Activated naive CD4-positive, alpha-beta T cell treated with anti-CD3 and anti-CD28 coated beads, Interleukin-2, amount 10 ng/mL, durations not matched to agents 7 days and 5 days (primary cell): ENCODE measurements at regions of chr1 and their contacts with region 1.

Region 1: DNA sequence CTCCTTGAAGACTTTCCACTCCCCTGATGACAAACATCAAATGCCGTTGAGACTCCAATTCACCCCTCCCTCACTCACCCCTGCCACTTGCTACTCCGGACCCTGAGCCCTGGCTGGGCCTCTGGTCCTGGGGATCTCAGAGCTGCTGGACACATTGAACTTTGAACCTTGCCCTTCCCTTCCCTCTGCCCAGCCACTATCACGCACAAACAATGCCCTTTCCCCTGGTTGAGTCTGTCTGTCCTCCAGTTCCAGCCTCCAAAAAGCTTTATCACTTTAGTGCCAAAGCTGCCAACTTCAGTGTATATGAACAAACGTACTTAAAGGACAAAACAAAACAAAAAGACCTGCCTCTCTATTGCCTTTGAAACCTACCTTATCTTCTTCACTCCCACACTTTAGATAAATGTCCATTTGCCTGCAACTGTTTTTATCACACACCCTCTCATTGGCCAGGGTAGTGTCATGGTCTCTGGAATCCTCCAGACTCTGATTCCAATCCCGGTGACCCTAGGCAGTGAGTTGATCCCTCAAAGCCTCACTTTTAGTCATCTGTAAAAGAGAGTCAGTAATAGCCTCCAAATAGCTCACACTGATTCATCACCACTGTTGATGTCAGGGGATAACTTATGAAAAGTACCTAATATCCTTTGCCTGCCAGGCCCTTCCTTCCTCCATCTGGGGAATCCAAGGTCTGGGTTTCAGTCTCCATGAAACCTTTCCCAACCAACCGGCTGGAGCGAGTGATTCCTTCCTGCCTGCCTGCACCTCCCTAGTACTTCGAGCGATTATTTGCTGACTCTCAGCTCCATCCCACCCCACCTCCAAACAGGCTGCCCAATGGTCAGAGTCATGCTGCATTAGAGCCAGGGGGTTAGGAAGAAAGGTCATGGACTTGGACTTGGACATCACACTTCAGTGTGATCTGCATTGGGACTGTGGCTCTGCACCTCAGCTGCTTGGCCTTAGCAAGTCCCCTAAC is 15.9 kb upstream of the SPOCD1 start:
- DNase-seq: no peak
- H3K4me3 Mint-ChIP-seq: no peak overlapping the region
- H3K27ac Mint-ChIP-seq: no peak overlapping the region
- H3K4me1 Mint-ChIP-seq: peaks cover 46% of the 10 kb centered on the region
- H3K27me3 Mint-ChIP-seq: peaks cover 11% of the 10 kb centered on the region

Region 2: DNA sequence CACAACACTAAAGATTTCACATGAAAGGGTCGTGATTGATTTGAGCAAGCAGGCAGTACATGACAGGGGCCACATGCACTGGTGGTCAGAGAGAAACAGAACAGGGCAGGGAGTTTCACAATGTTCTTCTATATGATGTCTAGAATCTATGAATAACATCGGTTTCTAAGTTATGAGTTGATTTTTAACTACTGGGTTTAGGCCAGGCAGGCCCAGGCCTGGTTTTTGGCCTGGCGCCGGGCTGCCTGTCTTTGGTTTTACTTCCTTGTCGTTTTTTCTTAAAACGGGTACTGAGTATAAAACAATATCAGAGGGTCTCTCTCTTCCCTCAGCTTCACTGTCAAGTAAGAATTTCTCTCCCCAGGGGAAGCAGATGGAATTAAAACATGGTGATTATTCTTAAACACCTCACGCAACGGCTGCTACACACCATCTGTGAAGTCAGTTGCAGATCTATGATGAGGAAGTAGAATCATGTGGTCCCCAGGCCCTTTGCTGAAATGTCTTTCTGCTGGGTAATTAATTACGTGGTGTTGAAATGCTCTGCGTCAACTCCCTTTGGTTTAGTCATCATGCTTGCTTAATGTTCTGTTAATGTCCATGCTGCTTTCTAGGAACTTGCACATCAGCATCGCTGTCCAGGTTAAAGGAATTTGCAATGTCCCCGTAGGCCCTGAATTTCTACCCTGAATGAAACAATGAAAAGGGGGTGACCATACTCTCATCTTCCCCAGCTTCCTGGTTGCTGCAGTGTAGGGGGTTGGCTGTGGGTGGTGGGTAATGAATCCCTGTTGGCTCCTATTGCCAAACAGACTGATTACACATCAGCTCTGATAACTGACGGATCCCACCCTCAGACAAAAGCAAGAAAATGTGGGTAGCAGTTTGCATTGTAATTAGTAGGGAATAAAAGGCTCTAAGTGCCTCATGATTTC is 348.4 kb before region 1 on chr1:
- CTCF ChIA-PET with region 1: no interaction called
- DNase-seq: no peak
- H3K4me3 Mint-ChIP-seq: no peak overlapping the region
- H3K27ac Mint-ChIP-seq: no peak overlapping the region
- H3K4me1 Mint-ChIP-seq: peaks cover 15% of the 10 kb centered on the region
- H3K27me3 Mint-ChIP-seq: peaks cover 4% of the 10 kb centered on the region

Region 3: DNA sequence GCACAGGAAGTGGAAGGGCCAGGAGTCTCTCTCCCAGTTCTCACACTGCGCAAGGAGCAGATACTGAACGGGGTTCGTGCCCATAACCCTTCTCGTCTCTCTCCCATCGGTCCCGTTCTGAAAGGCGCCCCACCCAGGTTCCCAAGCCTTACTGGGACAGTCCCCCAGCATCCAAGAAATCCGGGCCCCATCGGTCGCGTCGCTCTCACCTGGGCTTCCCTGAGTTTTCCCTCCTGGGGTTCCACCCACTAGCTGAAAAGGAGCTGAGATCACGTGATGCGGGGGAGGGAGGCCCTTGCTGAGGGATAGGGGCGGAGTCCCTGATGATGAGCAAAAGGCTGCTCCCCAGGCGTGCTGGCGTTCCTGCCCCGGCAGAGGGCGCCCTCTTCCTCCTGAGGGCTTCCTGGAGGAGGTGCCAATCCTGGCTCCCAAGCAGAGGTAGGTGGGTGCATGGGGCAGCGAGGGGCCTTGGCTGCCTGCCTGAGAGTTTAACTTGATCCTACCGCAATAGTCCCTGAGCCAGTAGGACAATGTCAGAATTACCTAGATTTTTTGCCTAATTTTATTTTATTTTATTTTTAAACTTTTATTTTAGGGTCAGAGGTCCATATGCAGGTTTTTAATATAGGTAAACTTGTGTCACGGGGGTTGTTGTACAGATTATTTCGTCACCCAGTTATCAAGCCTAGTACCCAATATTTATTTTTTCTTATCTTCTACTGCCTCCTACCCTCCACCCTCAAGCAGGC is 15.8 kb before region 1 on chr1 and contains the start of gene SPOCD1:
- CTCF ChIA-PET with region 1: interaction called, 13 read pairs
- DNase-seq: peak; percentile 90
- H3K4me3 Mint-ChIP-seq: peak within 1 kb of the TSS; percentile 28
- H3K27ac Mint-ChIP-seq: peak within 1 kb of the TSS; percentile 49
- H3K4me1 Mint-ChIP-seq: peaks cover 14% of the 10 kb centered on the region
- H3K27me3 Mint-ChIP-seq: peaks cover 8% of the 10 kb centered on the region